GM12878 (cell line): ENCODE measurements at regions of chr4 and their contacts with region 1.

Region 1: DNA sequence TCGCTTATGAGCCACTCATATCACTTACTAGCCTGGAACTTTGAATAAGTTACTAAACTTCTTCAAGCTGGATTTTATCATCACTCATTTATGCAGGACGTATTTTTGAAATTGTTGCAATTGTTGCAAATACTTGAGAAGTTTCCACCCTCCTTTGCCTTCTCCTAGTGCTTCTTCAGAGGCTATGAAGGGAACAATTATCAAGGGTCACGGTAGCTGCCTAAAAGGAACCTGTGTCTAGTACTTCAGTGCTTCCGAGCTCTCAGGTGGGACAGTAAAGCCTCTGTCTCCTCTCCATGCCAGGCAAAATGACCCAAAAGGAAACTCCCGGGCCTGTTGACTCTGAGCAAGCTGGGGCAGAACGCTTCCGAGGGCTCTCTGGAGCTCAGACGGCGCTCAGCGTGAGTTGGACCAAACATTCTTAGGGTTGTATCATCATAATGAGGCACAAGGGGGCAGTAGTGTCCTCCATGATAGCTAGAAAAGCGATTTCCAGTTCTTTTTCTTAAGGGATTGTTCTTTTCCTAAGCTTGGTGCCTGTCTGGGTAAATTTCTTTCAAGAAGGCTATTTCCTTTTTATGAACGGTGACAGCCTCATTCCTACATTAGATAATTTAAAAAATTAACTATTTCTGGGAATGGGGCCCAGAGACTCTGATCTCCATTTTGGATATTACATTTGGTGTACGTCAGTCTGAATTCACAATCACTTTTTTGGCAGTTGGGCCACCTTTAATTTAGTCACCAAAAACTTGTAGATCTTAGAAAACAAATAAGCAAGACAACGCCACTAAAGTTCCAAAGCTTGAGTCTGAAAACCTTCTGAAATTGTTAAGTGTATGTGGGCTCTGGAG is 73.1 kb downstream of the PACRGL start:
- DNase-seq: no peak
- ATAC-seq: peak; percentile 92
- H3K4me3 ChIP-seq: no peak overlapping the region
- H3K27ac ChIP-seq: no peak overlapping the region
- H3K4me1 ChIP-seq: no peaks in the 10 kb centered on the region
- H3K27me3 ChIP-seq: no peaks in the 10 kb centered on the region
- CTCF ChIP-seq: peak; percentile 57 to 68 (median 66); a peak in 5 of 6 replicates
- EP300 ChIP-seq: no peak
- POLR2A ChIP-seq: no peak
- RAD21 ChIP-seq: peak; percentile 54

Region 2: DNA sequence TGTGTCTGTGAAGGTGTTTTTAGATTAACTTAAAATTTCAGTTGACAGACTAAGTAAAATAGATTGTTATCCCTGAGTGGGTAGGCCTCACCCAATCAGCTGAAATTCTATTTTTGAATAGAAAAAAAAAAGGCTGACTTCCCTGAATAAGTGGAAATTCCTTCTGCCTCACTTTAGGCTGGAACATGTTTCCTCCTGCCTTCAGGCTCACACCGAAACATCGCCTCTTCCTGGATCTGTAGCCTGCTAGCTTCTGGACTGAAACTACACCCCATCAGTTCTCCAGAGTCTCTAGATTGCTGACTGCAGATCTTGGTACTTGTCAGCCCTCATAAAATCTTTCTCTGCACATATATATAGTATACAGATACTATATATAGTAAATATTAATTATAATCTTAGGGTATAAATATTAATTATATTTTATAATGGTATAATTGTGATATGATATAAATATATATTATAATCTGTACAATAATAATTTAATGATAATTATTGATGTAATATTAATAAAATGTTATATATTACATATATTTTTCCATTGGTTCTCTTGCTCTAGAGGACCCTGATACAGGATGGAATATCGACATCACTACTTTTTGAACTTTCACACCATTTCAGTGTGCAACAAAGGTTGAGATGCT is 535.4 kb before region 1 on chr4:
- CTCF ChIA-PET with region 1: no interaction called
- POLR2A ChIA-PET with region 1: no interaction called
- RAD21 ChIA-PET with region 1: no interaction called
- SMC1A ChIA-PET with region 1: no interaction called
- in situ Hi-C with region 1: no loop called
- intact Hi-C with region 1: no loop called
- DNase-seq: no peak
- ATAC-seq: no peak
- H3K4me3 ChIP-seq: no peak overlapping the region
- H3K27ac ChIP-seq: no peak overlapping the region
- H3K4me1 ChIP-seq: no peaks in the 10 kb centered on the region
- H3K27me3 ChIP-seq: no peaks in the 10 kb centered on the region
- CTCF ChIP-seq: no peak
- EP300 ChIP-seq: no peak
- POLR2A ChIP-seq: no peak
- RAD21 ChIP-seq: no peak

Region 3: GRCh38 chr4:20678400-20678799 is 95.0 kb before region 1 on chr4:
- CTCF ChIA-PET with region 1: no interaction called
- POLR2A ChIA-PET with region 1: no interaction called
- RAD21 ChIA-PET with region 1: no interaction called
- SMC1A ChIA-PET with region 1: no interaction called
- in situ Hi-C with region 1: no loop called
- intact Hi-C with region 1: no loop called
- DNase-seq: no peak
- ATAC-seq: no peak
- H3K4me3 ChIP-seq: no peak overlapping the region
- H3K27ac ChIP-seq: no peak overlapping the region
- H3K4me1 ChIP-seq: no peaks in the 10 kb centered on the region
- H3K27me3 ChIP-seq: no peaks in the 10 kb centered on the region
- CTCF ChIP-seq: no peak
- EP300 ChIP-seq: no peak
- POLR2A ChIP-seq: no peak
- RAD21 ChIP-seq: no peak

Region 4: GRCh38 chr4:20760053-20760452 is 13.3 kb before region 1 on chr4:
- CTCF ChIA-PET with region 1: interaction called, 21 read pairs
- POLR2A ChIA-PET with region 1: no interaction called
- RAD21 ChIA-PET with region 1: no interaction called
- SMC1A ChIA-PET with region 1: interaction called, 3 read pairs
- in situ Hi-C with region 1: no loop called
- intact Hi-C with region 1: no loop called
- DNase-seq: no peak
- ATAC-seq: peak; percentile 76
- H3K4me3 ChIP-seq: no peak overlapping the region
- H3K27ac ChIP-seq: no peak overlapping the region
- H3K4me1 ChIP-seq: no peaks in the 10 kb centered on the region
- H3K27me3 ChIP-seq: no peaks in the 10 kb centered on the region
- CTCF ChIP-seq: peak in 2 of 3 experiments; percentile 25 to 44; a peak in 2 of 6 replicates
- EP300 ChIP-seq: no peak
- POLR2A ChIP-seq: no peak
- RAD21 ChIP-seq: 0 out of 2 replicates have a peak, but pooled peaks have one; percentile 28

Region 5: GRCh38 chr4:20787940-20788665 is 14.7 kb after region 1 on chr4:
- CTCF ChIA-PET with region 1: interaction called, 14 read pairs
- POLR2A ChIA-PET with region 1: no interaction called
- RAD21 ChIA-PET with region 1: no interaction called
- SMC1A ChIA-PET with region 1: interaction called, 9 read pairs
- in situ Hi-C with region 1: no loop called
- intact Hi-C with region 1: no loop called
- DNase-seq: no peak
- ATAC-seq: no peak
- H3K4me3 ChIP-seq: no peak overlapping the region
- H3K27ac ChIP-seq: no peak overlapping the region
- H3K4me1 ChIP-seq: no peaks in the 10 kb centered on the region
- H3K27me3 ChIP-seq: no peaks in the 10 kb centered on the region
- CTCF ChIP-seq: no peak
- EP300 ChIP-seq: no peak
- POLR2A ChIP-seq: no peak
- RAD21 ChIP-seq: no peak

Region 6: DNA sequence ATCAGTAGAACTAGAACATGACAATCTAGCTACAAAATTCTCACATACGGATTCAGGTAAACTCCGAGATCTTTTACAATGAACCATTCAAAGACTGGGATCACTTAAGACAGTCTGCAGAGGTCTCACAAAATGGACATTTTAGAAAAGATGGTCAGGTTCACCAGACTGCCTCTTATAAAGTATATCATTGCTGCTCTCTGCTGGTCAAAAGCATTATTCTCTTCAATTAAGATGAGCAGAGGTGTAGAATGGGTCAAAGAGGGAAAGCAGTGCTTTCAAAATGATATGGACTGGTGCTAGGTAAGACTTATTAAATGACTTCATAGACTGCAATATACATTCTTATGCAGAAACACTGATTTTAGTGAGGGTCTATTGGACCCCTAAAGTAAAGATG is 361.6 kb after region 1 on chr4:
- CTCF ChIA-PET with region 1: interaction called, 41 read pairs
- POLR2A ChIA-PET with region 1: no interaction called
- RAD21 ChIA-PET with region 1: interaction called, 3 read pairs
- SMC1A ChIA-PET with region 1: interaction called, 22 read pairs
- in situ Hi-C with region 1: no loop called
- intact Hi-C with region 1: loop called (anchors 2 kb)
- DNase-seq: no peak
- ATAC-seq: 0 out of 3 replicates have a peak, but pooled peaks have one; percentile 22
- H3K4me3 ChIP-seq: no peak overlapping the region
- H3K27ac ChIP-seq: no peak overlapping the region
- H3K4me1 ChIP-seq: no peaks in the 10 kb centered on the region
- H3K27me3 ChIP-seq: no peaks in the 10 kb centered on the region
- CTCF ChIP-seq: no peak; a peak in 1 of 6 replicates
- EP300 ChIP-seq: no peak
- POLR2A ChIP-seq: no peak
- RAD21 ChIP-seq: 0 out of 2 replicates have a peak, but pooled peaks have one; percentile 4

Region 7: DNA sequence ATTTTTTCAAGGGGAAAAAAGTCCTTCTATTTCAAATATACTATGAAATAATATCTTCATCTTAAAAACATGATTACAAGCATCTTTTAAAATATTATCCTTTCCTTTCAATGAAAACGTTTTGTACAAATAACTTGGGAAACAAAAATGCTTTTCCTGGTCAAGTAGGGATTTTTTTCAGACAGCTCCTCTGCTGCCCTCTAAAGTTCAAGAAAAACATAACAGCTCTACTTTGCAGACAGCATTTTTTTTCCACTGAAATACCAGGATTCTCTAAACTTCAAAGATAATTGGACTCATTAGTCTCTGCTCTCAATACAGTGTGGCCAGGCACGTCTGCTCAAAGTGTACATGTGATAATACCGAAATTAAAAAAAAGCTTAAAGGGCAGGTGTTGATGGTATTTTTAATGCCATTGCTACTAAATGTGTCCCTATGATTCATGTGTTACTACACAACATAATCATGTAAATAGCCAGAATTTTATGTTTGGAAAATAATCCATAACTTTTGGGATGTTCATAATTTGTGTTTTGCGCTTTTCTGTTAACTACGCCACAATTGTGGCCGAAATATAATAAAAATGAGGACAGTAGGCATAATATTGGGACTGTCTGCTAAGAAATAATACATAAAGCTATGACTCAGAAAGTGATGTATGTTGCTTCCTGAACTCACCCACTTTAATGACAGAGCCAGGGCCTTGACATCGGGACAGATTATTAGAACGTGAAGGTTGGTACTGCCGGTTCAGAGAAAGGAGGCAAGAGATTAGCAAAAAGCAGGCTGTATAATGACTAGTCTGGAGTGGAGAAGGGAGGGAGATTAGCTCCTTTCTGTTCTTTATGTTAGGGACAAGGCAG is 696.3 kb after region 1 on chr4:
- CTCF ChIA-PET with region 1: interaction called, 54 read pairs
- POLR2A ChIA-PET with region 1: no interaction called
- RAD21 ChIA-PET with region 1: interaction called, 20 read pairs
- SMC1A ChIA-PET with region 1: interaction called, 24 read pairs
- in situ Hi-C with region 1: loop called (anchors 5 kb)
- intact Hi-C with region 1: loop called (anchors 1 kb)
- DNase-seq: no peak
- ATAC-seq: no peak
- H3K4me3 ChIP-seq: no peak overlapping the region
- H3K27ac ChIP-seq: no peak overlapping the region
- H3K4me1 ChIP-seq: no peaks in the 10 kb centered on the region
- H3K27me3 ChIP-seq: no peaks in the 10 kb centered on the region
- CTCF ChIP-seq: peak; percentile 36 to 41 (median 37); a peak in 4 of 6 replicates
- EP300 ChIP-seq: no peak
- POLR2A ChIP-seq: no peak
- RAD21 ChIP-seq: peak; percentile 44

Region 8: GRCh38 chr4:21765810-21766407 is 992.5 kb after region 1 on chr4:
- CTCF ChIA-PET with region 1: interaction called, 25 read pairs
- POLR2A ChIA-PET with region 1: no interaction called
- RAD21 ChIA-PET with region 1: interaction called, 3 read pairs
- SMC1A ChIA-PET with region 1: interaction called, 7 read pairs
- in situ Hi-C with region 1: loop called (anchors 10 kb)
- intact Hi-C with region 1: loop called (anchors 1 kb)
- DNase-seq: no peak
- ATAC-seq: peak; percentile 82
- H3K4me3 ChIP-seq: no peak overlapping the region
- H3K27ac ChIP-seq: no peak overlapping the region
- H3K4me1 ChIP-seq: no peaks in the 10 kb centered on the region
- H3K27me3 ChIP-seq: no peaks in the 10 kb centered on the region
- CTCF ChIP-seq: peak; percentile 78 to 91 (median 78)
- EP300 ChIP-seq: no peak
- POLR2A ChIP-seq: no peak
- RAD21 ChIP-seq: peak; percentile 62